Prostate gland (tissue), 2 donors: ENCODE measurements at regions of chr15 and their contacts with region 1.

Region 1: GRCh38 chr15:58227706-58228543 is 89.7 kb downstream of the AQP9 start:
- DNase-seq: peak; percentile 79
- H3K4me3 ChIP-seq: no peak overlapping the region
- H3K27ac ChIP-seq: peak overlapping the region in 1 of 2 donors; percentile 56
- H3K4me1 ChIP-seq: peaks cover 8% of the 10 kb centered on the region
- H3K27me3 ChIP-seq: no peaks in the 10 kb centered on the region
- CTCF ChIP-seq: peak; percentile 64 to 86 (median 84)
- POLR2A ChIP-seq: no peak

Region 2: GRCh38 chr15:57706405-57707209 is 521.3 kb before region 1 on chr15 and contains the start of gene POLR2M:
- intact Hi-C with region 1: no loop called
- DNase-seq: peak; percentile 94
- H3K4me3 ChIP-seq: peak within 1 kb of the TSS; percentile 77 to 79
- H3K27ac ChIP-seq: peak within 1 kb of the TSS; percentile 91 to 94
- H3K4me1 ChIP-seq: no peaks in the 10 kb centered on the region
- H3K27me3 ChIP-seq: no peaks in the 10 kb centered on the region
- CTCF ChIP-seq: no peak
- POLR2A ChIP-seq: peak; percentile 70
- total RNA-seq, gene POLR2M: 148 to 172 TPM

Region 3: DNA sequence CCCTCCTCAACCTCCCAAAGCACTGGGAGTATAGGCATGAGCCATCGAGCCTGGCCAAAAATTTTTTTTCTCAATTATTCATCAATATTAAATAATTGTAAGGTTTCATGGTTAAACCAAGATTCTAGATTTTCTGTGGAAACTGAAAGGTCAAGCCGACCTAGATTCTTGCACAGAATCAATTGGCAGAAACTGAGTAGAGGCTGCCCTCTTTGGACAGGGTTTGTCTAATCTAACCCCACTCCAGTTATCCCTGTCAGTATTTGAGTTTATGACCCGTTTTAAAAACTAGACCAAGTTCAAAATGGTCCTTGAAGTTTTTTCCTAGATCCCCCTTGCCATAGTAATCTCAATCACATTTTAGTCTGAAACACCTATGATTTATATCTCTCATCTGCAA is 530.2 kb after region 1 on chr15:
- intact Hi-C with region 1: loop called (anchors 5 kb)
- DNase-seq: no peak
- H3K4me3 ChIP-seq: no peak overlapping the region
- H3K27ac ChIP-seq: no peak overlapping the region
- H3K4me1 ChIP-seq: no peaks in the 10 kb centered on the region
- H3K27me3 ChIP-seq: no peaks in the 10 kb centered on the region
- CTCF ChIP-seq: peak in 2 of 4 experiments; percentile 8 to 20
- POLR2A ChIP-seq: no peak